ENCODE measurements at regions of chr2 and their contacts with region 1.

Region 1: DNA sequence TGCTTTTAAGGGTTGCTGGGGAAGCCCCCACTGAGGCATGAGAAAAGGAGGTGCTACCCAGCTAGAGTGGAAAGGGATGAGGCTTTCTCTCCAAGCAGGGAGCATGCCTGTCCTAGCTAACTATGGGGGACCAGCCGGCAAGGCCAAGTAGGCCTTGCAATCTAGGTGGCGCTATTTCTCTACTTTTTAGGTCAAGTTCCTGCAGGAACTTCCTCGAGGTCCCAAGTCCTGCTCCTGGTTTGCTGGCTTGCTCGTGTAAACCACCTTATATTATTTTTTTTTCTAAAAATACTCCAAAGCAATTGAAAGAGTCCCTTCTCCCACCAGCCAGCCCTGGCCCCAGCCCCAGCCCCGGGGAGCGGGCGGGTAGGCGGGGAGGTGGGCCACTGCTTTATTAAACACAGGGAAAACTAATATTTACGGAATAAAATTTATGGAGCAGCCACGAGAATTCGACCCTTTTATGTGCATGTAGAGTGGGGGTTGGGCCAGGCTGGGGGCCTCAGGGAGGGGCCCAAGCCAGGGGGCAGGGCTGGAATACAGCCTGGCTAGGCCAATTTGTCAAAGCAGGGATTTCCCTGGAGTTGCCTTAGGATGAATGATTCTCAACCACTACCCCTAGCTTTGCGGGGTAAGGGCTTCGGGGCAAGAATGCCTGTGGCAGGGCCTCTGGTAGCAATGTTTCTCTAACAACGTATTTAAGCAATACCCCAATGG is 12.8 kb upstream of the IHH start:
- DNase-seq: peak in 1 of 2 experiments; percentile 63
- H3K4me3 ChIP-seq: peak overlapping the region in 1 of 4 experiments; percentile 41; a peak in 2 of 8 replicates
- H3K27ac ChIP-seq: no peak overlapping the region
- H3K4me1 ChIP-seq: 0 out of 7 replicates have a peak, but pooled peaks cover 0 to 3% (median under 1%) of the 10 kb centered on the region in 4 experiments
- H3K27me3 ChIP-seq: no peaks in the 10 kb centered on the region
- CTCF ChIP-seq: peak; percentile 70 to 87 (median 85)
- EP300 ChIP-seq: no peak
- POLR2A ChIP-seq: no peak
- RAD21 ChIP-seq: peak; percentile 77 to 84

Region 2: DNA sequence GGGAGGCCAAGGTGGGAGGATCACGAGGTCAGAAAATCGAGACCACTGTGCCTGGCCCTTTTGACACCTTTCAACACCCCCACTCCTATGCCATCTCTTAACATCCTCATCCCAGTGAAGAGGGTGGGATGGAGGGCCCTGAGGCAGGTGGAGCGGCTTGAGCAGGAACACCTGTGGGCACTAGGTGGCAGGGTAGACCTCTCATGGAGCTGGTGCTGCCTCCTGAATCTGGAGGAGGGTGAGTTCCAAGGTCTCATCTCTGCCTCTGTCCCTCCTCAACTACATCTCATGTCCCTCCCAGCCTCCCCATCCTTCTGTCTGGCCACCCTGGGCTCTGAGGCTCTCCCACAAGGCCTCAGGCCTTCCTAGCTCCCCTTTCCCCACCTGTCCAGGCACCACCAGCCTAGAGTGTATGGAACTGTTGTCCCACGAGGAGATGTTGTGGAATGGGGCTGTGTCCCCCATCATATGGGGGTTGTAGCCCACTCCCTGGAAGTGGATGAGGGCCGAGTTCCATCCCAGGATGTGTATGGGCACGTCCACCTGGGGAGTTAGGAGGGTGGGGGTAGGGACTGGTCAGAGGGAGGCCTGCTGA is 63.3 kb before region 1 on chr2:
- CTCF ChIA-PET with region 1: interaction called, 22 read pairs
- POLR2A ChIA-PET with region 1: no interaction called
- DNase-seq: no peak
- H3K4me3 ChIP-seq: no peak overlapping the region
- H3K27ac ChIP-seq: no peak overlapping the region
- H3K4me1 ChIP-seq: no peaks in the 10 kb centered on the region
- H3K27me3 ChIP-seq: peaks cover 1 to 21% (median 10%) of the 10 kb centered on the region in 4 experiments
- CTCF ChIP-seq: peak; percentile 67 to 85 (median 81)
- EP300 ChIP-seq: no peak
- POLR2A ChIP-seq: no peak
- RAD21 ChIP-seq: peak; percentile 69 to 75

Region 3: GRCh38 chr2:219087361-219087760 is 13.8 kb after region 1 on chr2:
- CTCF ChIA-PET with region 1: interaction called, 133 read pairs
- POLR2A ChIA-PET with region 1: interaction called, 3 read pairs
- DNase-seq: no peak
- H3K4me3 ChIP-seq: no peak overlapping the region
- H3K27ac ChIP-seq: no peak overlapping the region
- H3K4me1 ChIP-seq: no peaks in the 10 kb centered on the region
- H3K27me3 ChIP-seq: no peaks in the 10 kb centered on the region
- CTCF ChIP-seq: no peak
- EP300 ChIP-seq: no peak
- POLR2A ChIP-seq: no peak
- RAD21 ChIP-seq: no peak

Region 4: GRCh38 chr2:219095406-219095935 is 21.9 kb after region 1 on chr2:
- CTCF ChIA-PET with region 1: interaction called, 1,777 read pairs
- POLR2A ChIA-PET with region 1: interaction called, 3 read pairs
- DNase-seq: no peak
- H3K4me3 ChIP-seq: no peak overlapping the region
- H3K27ac ChIP-seq: no peak overlapping the region
- H3K4me1 ChIP-seq: peaks cover 0 to 3% (median 0%) of the 10 kb centered on the region in 4 experiments; a peak in 1 of 7 replicates
- H3K27me3 ChIP-seq: peaks cover 0 to 1% (median 0%) of the 10 kb centered on the region in 4 experiments; a peak in 1 of 7 replicates
- CTCF ChIP-seq: no peak
- EP300 ChIP-seq: no peak
- POLR2A ChIP-seq: no peak
- RAD21 ChIP-seq: no peak

Region 5: GRCh38 chr2:219186754-219187456 is 113.3 kb after region 1 on chr2:
- CTCF ChIA-PET with region 1: no interaction called
- POLR2A ChIA-PET with region 1: no interaction called
- DNase-seq: no peak
- H3K4me3 ChIP-seq: no peak overlapping the region
- H3K27ac ChIP-seq: no peak overlapping the region
- H3K4me1 ChIP-seq: no peaks in the 10 kb centered on the region
- H3K27me3 ChIP-seq: no peaks in the 10 kb centered on the region
- CTCF ChIP-seq: no peak
- EP300 ChIP-seq: no peak
- POLR2A ChIP-seq: no peak
- RAD21 ChIP-seq: no peak

Measured in H1 (cell line).